ENCODE measurements at regions of chr3 and their contacts with region 1.

Region 1: GRCh38 chr3:39750712-39751111 is 58.7 kb upstream of the MYRIP start:
- DNase-seq: no peak
- H3K4me3 ChIP-seq: no peak overlapping the region
- H3K27ac ChIP-seq: no peak overlapping the region
- H3K4me1 ChIP-seq: no peaks in the 10 kb centered on the region
- H3K27me3 ChIP-seq: no peaks in the 10 kb centered on the region
- CTCF ChIP-seq: no peak

Region 2: DNA sequence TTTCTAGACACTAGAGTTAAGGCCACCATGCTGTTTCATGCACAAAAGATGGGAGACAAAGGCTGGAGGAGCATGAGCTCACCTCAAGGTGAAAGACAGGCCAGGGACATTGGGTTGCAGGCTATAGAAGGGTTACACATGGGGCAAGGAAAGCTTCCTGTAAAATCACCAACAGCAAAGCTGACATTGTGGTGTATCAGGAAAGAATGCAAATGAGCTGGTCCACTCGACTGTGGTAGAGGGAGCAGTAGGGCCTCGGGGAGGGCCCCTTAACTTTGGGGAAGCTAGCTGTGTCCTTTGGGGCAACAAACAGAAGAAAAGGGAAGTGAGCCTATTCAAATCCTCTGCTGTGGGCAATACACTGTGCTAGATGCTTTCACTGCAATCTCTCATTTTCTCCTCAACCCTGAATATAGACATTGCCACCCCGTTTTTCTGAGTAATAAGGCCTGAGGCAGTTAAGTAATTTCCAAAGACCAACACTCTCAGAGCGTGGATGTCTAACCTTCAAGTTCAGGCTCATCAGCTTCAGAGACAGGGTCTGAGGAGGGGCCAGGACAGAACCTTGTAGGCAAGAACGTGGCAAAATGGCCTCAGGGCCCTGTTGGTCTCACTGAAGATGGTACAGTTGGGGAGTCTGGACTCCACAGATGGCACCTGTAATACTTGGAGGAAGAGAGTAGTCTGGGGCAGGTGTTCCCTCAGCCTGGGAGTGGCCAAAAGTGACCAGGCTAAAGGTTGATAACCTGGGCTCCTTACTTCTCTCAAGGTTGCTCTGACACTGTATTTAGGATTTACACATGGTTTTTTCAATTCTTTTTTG is 495.0 kb before region 1 on chr3:
- intact Hi-C with region 1: no loop called
- DNase-seq: peak in 1 of 2 donors; percentile 15
- H3K4me3 ChIP-seq: no peak overlapping the region
- H3K27ac ChIP-seq: no peak overlapping the region
- H3K4me1 ChIP-seq: peaks cover 0 to 2% of the 10 kb centered on the region in 2 donors
- H3K27me3 ChIP-seq: no peaks in the 10 kb centered on the region
- CTCF ChIP-seq: no peak

Region 3: GRCh38 chr3:39531650-39532049 is 219.1 kb before region 1 on chr3:
- intact Hi-C with region 1: no loop called
- DNase-seq: peak in 1 of 2 donors; percentile 66
- H3K4me3 ChIP-seq: no peak overlapping the region
- H3K27ac ChIP-seq: peak overlapping the region; percentile 22 to 72
- H3K4me1 ChIP-seq: peaks cover 0 to 3% of the 10 kb centered on the region in 2 donors
- H3K27me3 ChIP-seq: no peaks in the 10 kb centered on the region
- CTCF ChIP-seq: no peak

Region 4: DNA sequence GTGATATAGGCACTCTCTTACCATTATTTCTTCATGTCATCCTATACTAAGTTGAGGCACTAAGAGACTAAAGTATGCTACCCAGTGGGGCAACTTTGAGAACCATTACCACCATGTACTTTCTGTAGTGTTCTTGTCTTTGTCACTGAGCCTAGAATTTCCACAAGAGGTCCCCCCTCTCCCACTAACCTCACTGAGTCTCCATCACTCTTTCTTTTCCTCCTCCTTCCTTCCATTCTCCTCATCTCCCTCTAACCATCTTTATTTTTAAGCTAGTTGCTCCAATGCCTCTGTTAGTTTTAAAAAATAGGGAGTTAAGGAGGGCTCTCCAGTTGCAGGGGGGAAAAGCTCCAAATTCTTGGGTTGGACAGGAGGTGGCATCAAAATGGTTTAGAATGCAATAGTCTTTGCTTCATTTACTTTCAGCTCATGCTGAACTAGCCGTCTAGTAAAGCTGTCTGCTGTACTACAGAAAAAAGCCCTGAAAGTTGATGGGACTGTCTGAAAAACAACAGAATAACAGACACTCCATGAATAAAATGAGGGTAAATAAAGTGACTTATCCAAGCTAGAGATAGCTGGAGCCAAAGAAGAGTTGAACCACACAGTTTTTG is 26.4 kb before region 1 on chr3:
- intact Hi-C with region 1: no loop called
- DNase-seq: no peak
- H3K4me3 ChIP-seq: no peak overlapping the region
- H3K27ac ChIP-seq: no peak overlapping the region
- H3K4me1 ChIP-seq: no peaks in the 10 kb centered on the region
- H3K27me3 ChIP-seq: no peaks in the 10 kb centered on the region
- CTCF ChIP-seq: peak in 1 of 3 experiments; percentile 36

Region 5: GRCh38 chr3:39788128-39788883 is 37.6 kb after region 1 on chr3:
- intact Hi-C with region 1: loop called (anchors 1 kb)
- DNase-seq: no peak
- H3K4me3 ChIP-seq: no peak overlapping the region
- H3K27ac ChIP-seq: no peak overlapping the region
- H3K4me1 ChIP-seq: no peaks in the 10 kb centered on the region
- H3K27me3 ChIP-seq: no peaks in the 10 kb centered on the region
- CTCF ChIP-seq: no peak

Region 6: GRCh38 chr3:40566694-40567093 is 816.0 kb after region 1 on chr3:
- intact Hi-C with region 1: no loop called
- DNase-seq: no peak
- H3K4me3 ChIP-seq: no peak overlapping the region
- H3K27ac ChIP-seq: no peak overlapping the region
- H3K4me1 ChIP-seq: no peaks in the 10 kb centered on the region
- H3K27me3 ChIP-seq: no peaks in the 10 kb centered on the region
- CTCF ChIP-seq: no peak

Measured in ascending aorta (tissue), 2 donors.